Astrocyte of the spinal cord (primary cell): ENCODE measurements at regions of chr17 and their contacts with region 1.

Region 1: DNA sequence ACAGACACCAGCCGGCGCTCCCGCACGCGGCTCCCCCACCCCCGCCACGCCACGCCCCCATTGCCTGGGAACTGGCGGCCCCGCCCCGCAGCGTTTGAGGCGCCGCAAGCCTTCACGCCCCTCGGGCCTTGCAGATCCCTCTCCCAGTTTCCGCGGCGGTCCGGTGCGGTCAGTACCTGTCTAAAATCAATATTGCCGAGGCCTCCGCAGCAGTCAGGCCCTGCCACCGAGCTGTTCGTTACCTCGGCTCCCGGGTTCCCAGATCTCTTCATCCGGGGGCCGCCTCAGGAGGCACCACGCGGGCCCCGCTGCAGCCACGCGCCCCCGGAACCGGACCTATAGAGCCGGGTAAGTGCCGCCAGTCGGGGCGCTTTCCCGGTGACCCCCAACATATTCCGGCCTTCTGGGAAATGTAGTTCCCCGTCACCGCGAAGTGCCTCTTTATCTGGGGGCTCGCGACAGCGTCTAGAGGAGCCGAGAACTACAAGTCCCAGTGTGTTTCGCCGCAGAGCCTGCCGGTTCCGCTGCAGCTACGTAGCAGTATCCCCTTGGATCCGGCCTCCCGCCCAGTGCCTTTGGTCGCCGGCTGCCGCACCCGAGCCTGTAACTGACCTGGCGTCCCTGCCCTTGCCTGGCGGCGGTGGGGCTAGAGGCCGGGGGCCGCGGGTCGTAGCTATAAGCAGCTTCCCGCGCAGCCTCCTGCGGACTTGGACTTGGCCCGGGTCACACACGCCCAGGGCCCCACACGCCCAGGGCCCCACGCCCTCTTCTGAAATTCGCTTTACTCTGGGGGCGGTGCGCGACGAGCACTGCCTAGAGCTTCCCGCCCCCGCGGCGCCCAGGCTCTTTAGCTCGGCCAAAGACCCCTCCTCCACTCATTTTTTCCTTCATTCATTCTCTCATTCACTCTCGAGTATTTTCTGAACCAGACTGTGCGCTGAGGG is at the start of gene PEMT:
- DNase-seq: peak; percentile 99
- H3K4me3 ChIP-seq: peak within 1 kb of the TSS; percentile 85
- CTCF ChIP-seq: no peak

Region 2: GRCh38 chr17:17179371-17179827 is 412.2 kb before region 1 on chr17:
- in situ Hi-C with region 1: no loop called
- DNase-seq: no peak
- H3K4me3 ChIP-seq: no peak overlapping the region
- CTCF ChIP-seq: no peak

Region 3: DNA sequence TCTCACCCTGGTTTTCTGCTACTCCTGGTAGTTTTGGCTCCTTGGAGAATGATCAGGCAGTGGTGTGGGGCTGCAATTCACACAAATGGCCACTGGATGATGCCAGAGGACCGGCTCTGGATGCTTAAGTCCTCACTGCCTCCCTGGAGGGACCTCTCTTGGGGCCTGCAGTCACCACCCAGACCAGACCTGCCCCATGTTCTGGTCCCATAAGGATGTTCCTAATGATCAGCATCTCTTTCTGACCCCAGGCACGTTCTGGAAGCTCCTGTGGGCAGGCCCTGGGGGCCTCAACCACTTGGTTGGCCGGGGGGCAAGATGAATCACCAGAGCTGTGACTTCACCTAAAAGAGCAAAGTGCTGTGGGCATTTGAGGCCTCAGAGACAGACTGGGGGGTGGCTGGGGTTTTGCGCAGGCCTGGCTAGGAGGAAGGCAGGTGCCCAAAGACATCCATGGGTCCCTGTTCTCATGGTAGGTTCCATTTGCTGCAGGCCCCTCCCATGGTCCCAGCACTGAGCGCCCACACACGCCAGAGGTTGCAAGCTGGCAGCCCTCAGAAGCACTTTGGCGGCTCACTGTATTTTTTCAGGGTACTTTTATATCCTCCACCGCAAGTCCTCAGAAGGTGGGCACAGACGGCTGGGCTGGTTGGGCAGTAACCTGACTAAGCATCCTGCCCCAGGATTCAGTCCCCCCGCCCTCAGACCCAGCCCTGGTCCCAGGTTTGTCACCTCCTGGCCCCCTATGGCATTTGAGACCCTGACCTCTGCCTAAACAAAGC is 235.3 kb before region 1 on chr17:
- in situ Hi-C with region 1: loop called (anchors 25 kb)
- DNase-seq: peak; percentile 85
- H3K4me3 ChIP-seq: no peak overlapping the region
- CTCF ChIP-seq: peak; percentile 100

Region 4: GRCh38 chr17:17500997-17501605 is 90.5 kb before region 1 on chr17:
- in situ Hi-C with region 1: no loop called
- DNase-seq: no peak
- H3K4me3 ChIP-seq: no peak overlapping the region
- CTCF ChIP-seq: no peak

Region 5: GRCh38 chr17:17723354-17724261 is 132.0 kb after region 1 on chr17:
- in situ Hi-C with region 1: no loop called
- DNase-seq: peak; percentile 83
- H3K4me3 ChIP-seq: peak overlapping the region; percentile 48
- CTCF ChIP-seq: no peak